Dendritic cell treated with granulocyte-macrophage colony-stimulating factor and Interleukin-4, amounts not matched to agents 40 ng/mL and 50 ng/mL, for 4 days (primary cell): ENCODE measurements at regions of chrX and their contacts with region 1.

Region 1: GRCh38 chrX:98328006-98328405 is 1444.3 kb downstream of the RPA4 start:
- H3K4me3 Mint-ChIP-seq: no peak overlapping the region
- H3K27ac Mint-ChIP-seq: no peak overlapping the region
- H3K4me1 Mint-ChIP-seq: no peaks in the 10 kb centered on the region
- H3K27me3 Mint-ChIP-seq: no peaks in the 10 kb centered on the region

Region 2: DNA sequence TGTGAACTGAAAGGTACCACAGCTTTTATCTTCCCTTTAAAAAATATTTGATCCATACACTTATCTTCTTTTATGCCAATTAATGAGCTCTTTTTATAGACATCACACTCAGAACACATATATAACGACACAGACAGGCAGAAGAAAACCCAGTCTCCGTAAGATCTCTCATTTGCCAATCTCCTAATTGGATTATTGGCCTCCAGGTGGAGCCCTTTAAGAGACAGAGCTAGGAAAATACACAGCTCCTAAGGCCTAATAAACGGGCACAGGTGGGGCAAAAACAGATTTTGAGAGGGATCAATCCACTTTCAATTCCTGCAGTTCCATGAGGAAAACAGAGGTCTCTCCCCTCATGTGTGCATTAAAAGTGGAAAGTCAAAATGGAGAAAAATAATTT is 51.1 kb after region 1 on chrX:
- intact Hi-C with region 1: loop called (anchors 5 kb)
- H3K4me3 Mint-ChIP-seq: no peak overlapping the region
- H3K27ac Mint-ChIP-seq: no peak overlapping the region
- H3K4me1 Mint-ChIP-seq: no peaks in the 10 kb centered on the region
- H3K27me3 Mint-ChIP-seq: no peaks in the 10 kb centered on the region

Region 3: GRCh38 chrX:98548519-98548918 is 220.5 kb after region 1 on chrX:
- intact Hi-C with region 1: no loop called
- H3K4me3 Mint-ChIP-seq: no peak overlapping the region
- H3K27ac Mint-ChIP-seq: no peak overlapping the region
- H3K4me1 Mint-ChIP-seq: no peaks in the 10 kb centered on the region
- H3K27me3 Mint-ChIP-seq: no peaks in the 10 kb centered on the region

Region 4: GRCh38 chrX:98627645-98628044 is 299.6 kb after region 1 on chrX:
- intact Hi-C with region 1: no loop called
- H3K4me3 Mint-ChIP-seq: no peak overlapping the region
- H3K27ac Mint-ChIP-seq: no peak overlapping the region
- H3K4me1 Mint-ChIP-seq: no peaks in the 10 kb centered on the region
- H3K27me3 Mint-ChIP-seq: no peaks in the 10 kb centered on the region